HEK293T (cell line): ENCODE measurements at regions of chr11 and their contacts with region 1.

Region 1: DNA sequence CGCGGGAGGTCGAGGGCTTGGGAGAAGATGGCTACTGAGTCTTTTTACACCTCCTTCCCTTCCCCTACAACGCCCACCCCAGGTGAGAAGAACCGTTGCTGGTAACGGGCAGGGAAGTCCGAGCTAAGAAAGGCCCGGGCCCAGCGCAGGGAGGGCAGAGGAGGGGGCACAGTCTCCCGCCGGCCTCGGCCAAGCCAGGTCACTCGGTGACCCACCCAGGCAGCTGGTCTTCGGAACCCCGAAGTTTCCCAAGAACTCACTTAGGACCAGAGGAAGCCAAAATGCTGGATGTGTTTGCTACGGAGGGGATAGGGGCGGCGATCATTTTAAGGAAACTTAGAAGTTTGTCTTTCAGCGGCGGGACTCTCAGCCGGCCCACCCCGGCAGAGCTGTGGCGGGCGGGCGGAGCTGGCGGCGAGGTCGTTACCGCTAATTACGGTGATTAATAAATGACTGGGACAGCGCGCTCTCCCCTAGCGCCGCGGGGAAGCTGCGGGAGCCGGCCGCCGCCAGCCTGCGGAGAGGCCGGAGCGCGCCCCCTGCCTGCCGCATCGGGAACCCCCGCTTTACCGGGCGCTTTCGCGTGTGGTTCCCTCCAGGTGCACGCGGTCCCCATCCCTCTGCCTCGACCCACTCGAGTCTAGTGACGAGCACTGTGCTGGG is 820 bp downstream of the ROBO3 start:
- DNase-seq: peak; percentile 83

Region 2: GRCh38 chr11:124837491-124837856 is 28.6 kb before region 1 on chr11:
- CTCF ChIA-PET with region 1: interaction called, 24 read pairs
- POLR2A ChIA-PET with region 1: interaction called, 9 read pairs
- DNase-seq: peak; percentile 54